Calu3 (cell line): ENCODE measurements at regions of chr6 and their contacts with region 1.

Region 1: DNA sequence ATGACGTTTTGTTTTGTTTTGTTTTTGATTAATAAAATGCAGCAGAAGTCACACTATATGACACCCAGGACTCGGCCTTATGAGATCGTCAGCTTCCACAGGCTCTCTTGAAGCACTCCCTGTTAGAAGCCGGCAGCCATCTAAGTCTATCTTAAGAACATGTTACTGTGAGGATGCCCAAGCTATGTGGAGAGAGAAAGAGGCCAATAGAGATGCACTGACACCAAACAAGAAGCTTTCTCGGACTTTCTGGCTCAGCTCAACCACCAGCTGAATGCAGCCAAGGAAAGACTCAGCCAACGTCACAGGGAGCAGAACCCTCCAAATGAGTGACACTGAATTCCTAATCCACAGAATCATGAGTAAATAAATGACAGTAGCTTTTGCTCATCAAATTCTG is 14.0 kb downstream of the SGK1 start:
- DNase-seq: no peak
- H3K4me3 Mint-ChIP-seq: no peak overlapping the region
- H3K27ac Mint-ChIP-seq: no peak overlapping the region
- H3K4me1 Mint-ChIP-seq: peaks cover 8% of the 10 kb centered on the region
- H3K27me3 Mint-ChIP-seq: no peaks in the 10 kb centered on the region
- CTCF ChIP-seq: no peak

Region 2: GRCh38 chr6:134097114-134097707 is 206.7 kb before region 1 on chr6:
- CTCF ChIA-PET with region 1: no interaction called
- intact Hi-C with region 1: no loop called
- DNase-seq: peak; percentile 74
- H3K4me3 Mint-ChIP-seq: no peak overlapping the region
- H3K27ac Mint-ChIP-seq: no peak overlapping the region
- H3K4me1 Mint-ChIP-seq: no peaks in the 10 kb centered on the region
- H3K27me3 Mint-ChIP-seq: peaks cover 18% of the 10 kb centered on the region
- CTCF ChIP-seq: peak; percentile 73

Region 3: DNA sequence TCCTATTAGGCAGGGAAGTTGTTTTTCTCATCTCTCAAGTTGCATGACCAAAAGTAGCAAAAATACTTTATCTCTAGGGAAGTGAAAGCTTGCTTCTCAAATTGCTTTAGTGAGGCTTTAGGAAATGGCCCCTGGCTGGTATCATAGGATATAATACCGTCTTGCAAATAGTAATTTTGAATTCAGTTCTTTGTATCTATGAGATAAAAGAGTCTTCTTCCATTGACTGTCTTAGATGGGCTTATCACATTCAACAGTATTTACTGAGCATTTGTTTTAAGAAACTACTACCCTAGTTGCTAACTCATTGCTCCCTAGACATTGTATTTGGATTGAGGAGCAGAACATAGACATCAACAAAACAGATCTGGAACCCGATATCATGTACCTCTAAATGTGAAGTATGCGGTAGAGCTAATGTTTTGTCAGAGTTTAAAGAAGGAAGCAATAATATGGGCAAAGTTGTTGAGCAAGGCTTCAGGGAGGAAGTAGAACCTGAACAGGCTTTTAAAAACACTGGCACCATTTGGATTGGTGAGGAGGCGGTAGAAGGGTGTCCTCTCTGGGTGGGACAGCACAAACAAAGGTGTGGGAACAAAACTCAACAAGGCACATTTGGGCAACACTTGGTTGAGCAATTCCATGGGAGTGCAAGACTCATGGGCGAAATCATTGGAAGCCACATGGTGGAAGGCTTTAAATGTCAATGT is 87.4 kb before region 1 on chr6:
- CTCF ChIA-PET with region 1: interaction called, 10 read pairs
- intact Hi-C with region 1: no loop called
- DNase-seq: no peak
- H3K4me3 Mint-ChIP-seq: no peak overlapping the region
- H3K27ac Mint-ChIP-seq: no peak overlapping the region
- H3K4me1 Mint-ChIP-seq: no peaks in the 10 kb centered on the region
- H3K27me3 Mint-ChIP-seq: no peaks in the 10 kb centered on the region
- CTCF ChIP-seq: no peak